WTC11 (cell line): ENCODE measurements at regions of chr3 and their contacts with region 1.

Region 1: DNA sequence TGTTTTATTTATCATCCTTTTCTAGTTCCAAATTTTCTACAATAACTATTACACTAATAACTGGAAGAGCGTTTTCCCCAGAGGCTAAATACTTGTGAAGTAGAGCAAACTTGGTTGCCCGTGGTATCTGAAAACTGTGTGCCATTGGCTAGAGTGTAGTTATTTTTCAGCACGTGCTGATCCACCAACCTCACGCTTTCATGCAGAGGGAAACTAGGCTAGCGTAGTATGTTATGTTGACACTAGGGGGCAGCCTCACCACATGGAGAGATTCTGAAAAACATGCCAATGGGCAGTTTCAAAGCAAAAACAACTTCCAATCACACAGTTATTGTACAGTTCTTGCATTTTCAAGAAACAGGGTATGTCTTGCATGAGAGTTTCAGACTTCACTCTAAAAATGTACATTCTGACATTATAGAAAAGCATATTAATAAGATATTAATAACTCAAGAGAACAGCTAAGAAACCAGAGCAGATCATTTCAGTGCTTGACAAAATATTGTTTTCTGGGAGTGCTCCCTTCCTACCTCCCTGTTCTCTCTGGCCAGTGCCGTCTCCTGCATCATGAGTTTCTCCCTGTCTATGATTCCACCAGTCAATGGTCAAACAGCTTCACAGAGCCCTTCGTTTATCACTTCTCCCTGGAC is 39.7 kb downstream of the SPATA12 start:
- DNase-seq: peak; percentile 70
- ATAC-seq: peak; percentile 69
- H3K4me3 Mint-ChIP-seq: no peak overlapping the region
- H3K27ac Mint-ChIP-seq: peak overlapping the region; percentile 72
- H3K4me1 Mint-ChIP-seq: peaks cover 25% of the 10 kb centered on the region
- H3K27me3 Mint-ChIP-seq: no peaks in the 10 kb centered on the region
- CTCF ChIP-seq: peak; percentile 93

Region 2: DNA sequence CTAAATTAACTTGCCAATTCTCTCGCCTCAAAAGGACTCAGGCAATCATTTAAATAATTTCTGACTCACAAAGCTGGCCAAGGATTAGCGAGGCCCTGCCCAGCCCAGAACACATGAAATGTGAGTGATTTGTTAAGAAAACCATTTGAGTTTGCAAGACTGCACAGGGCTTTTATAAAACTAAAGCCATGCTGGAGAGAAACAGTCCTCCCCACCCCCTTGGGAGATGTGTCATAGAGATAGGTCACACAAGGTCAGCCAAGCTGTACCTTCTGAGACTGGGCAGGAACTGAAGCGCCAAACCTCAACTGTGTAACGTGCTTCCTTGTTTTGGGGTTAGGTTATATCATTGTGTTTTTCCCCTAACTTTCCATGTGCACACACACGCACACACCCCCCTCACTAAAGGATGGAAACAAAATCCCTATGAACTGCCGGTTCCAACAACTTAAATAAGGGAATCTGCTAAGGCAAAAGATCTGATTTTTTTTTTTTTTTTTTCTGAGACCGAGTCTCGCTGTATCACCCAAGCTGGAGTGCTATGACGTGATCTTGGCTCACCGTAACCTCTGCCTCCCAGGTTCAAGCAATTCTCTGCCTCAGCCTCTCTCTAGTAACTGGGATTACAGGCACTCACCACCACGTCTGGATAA is 31.6 kb before region 1 on chr3:
- CTCF ChIA-PET with region 1: no interaction called
- POLR2A ChIA-PET with region 1: no interaction called
- DNase-seq: no peak
- ATAC-seq: no peak
- H3K4me3 Mint-ChIP-seq: no peak overlapping the region
- H3K27ac Mint-ChIP-seq: peak overlapping the region; percentile 54; the same call in 1 of the 2 replicates
- H3K4me1 Mint-ChIP-seq: peaks cover 14% of the 10 kb centered on the region
- H3K27me3 Mint-ChIP-seq: no peaks in the 10 kb centered on the region; the same call in 1 of the 2 replicates
- CTCF ChIP-seq: no peak

Region 3: DNA sequence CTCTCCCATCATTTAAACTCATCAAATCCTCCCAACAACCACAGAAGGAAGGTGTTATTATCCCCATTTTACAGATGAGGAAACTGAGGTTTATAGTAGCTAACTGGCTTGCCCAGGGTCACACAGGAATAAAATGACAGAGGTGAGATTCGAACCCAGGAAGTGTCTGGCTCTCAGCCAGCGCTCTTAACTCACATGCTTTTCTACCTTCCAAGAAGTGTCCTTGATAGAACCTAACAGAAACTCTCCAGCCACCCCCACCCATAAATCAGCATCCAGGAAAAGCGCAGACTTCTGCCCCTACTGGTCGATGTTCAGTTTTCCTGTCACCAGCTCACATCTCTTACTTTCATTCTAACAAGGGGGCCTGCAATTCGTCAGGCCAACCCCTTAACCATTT is 12.0 kb after region 1 on chr3:
- CTCF ChIA-PET with region 1: interaction called, 19 read pairs
- POLR2A ChIA-PET with region 1: interaction called, 6 read pairs
- DNase-seq: peak; percentile 34
- ATAC-seq: no peak; the same call in 1 of the 2 replicates
- H3K4me3 Mint-ChIP-seq: no peak overlapping the region
- H3K27ac Mint-ChIP-seq: peak overlapping the region; percentile 11; the same call in 1 of the 2 replicates
- H3K4me1 Mint-ChIP-seq: peaks cover 56% of the 10 kb centered on the region
- H3K27me3 Mint-ChIP-seq: no peaks in the 10 kb centered on the region
- CTCF ChIP-seq: no peak

Region 4: GRCh38 chr3:57169872-57170623 is 69.9 kb after region 1 on chr3:
- CTCF ChIA-PET with region 1: interaction called, 20 read pairs
- POLR2A ChIA-PET with region 1: no interaction called
- DNase-seq: peak; percentile 90
- ATAC-seq: peak; percentile 83
- H3K4me3 Mint-ChIP-seq: peak overlapping the region; percentile 57
- H3K27ac Mint-ChIP-seq: peak overlapping the region; percentile 72; the same call in 1 of the 2 replicates
- H3K4me1 Mint-ChIP-seq: peaks cover 36% of the 10 kb centered on the region
- H3K27me3 Mint-ChIP-seq: peaks cover 22% of the 10 kb centered on the region
- CTCF ChIP-seq: peak; percentile 75